ENCODE measurements at regions of chr9 and their contacts with region 1.

Region 1: DNA sequence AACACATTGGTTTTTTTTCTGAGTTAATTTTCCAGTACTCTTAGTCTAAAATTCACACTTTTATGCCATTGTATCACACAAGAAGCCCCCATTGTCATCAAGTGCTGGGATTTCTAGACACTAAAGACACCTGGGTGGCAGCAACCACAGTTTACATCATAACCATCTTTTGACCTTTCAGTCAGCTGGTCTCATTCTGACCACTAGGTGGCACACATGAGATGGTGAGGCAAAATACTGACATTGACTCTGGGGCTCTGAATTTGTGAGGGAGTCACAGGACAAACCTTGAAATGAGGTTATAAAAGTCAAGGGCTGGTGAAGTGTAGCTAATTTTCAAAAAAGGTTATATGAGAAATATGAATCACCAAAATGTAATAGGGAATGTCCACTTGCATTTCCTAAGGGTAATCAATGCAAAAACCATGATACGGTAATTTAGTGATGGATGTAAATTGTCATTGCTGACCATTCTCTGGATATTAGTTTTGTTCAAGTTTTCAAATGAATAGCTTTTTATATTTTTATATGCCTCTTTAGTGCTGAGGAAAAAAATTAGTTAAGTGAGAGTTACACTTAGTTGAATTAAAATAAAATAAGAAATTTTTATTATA is 229.4 kb downstream of the DMAC1 start:
- DNase-seq: peak; percentile 18 to 76 (median 63)
- ATAC-seq: peak; percentile 84
- H3K4me3 ChIP-seq: no peak overlapping the region
- H3K4me3 Mint-ChIP-seq: no peak overlapping the region
- H3K27ac ChIP-seq: no peak overlapping the region
- H3K27ac Mint-ChIP-seq: peak overlapping the region in 1 of 9 donors; percentile 26
- H3K4me1 ChIP-seq: no peaks in the 10 kb centered on the region
- H3K4me1 Mint-ChIP-seq: peaks cover 0 to 5% (median 0%) of the 10 kb centered on the region in 7 donors
- H3K27me3 ChIP-seq: no peaks in the 10 kb centered on the region
- H3K27me3 Mint-ChIP-seq: peaks cover 0 to 28% (median 3%) of the 10 kb centered on the region in 5 donors

Region 2: GRCh38 chr9:6703898-6704639 is 866.1 kb before region 1 on chr9:
- CTCF ChIA-PET with region 1: no interaction called
- POLR2A ChIA-PET with region 1: no interaction called
- intact Hi-C with region 1: no loop called
- DNase-seq: peak; percentile 70 to 86 (median 77)
- ATAC-seq: peak; percentile 90
- H3K4me3 ChIP-seq: peak overlapping the region; percentile 98
- H3K4me3 Mint-ChIP-seq: peak overlapping the region; percentile 82 to 98 (median 95)
- H3K27ac ChIP-seq: peak overlapping the region; percentile 97
- H3K27ac Mint-ChIP-seq: peak overlapping the region; percentile 91 to 98 (median 93)
- H3K4me1 ChIP-seq: no peaks in the 10 kb centered on the region
- H3K4me1 Mint-ChIP-seq: peaks cover 3 to 15% (median 6%) of the 10 kb centered on the region in 7 donors
- H3K27me3 ChIP-seq: no peaks in the 10 kb centered on the region
- H3K27me3 Mint-ChIP-seq: peaks cover 0 to 3% (median 0%) of the 10 kb centered on the region in 5 donors

Region 3: GRCh38 chr9:7613931-7614330 is 43.7 kb after region 1 on chr9:
- CTCF ChIA-PET with region 1: interaction called, 15 read pairs
- POLR2A ChIA-PET with region 1: no interaction called
- intact Hi-C with region 1: loop called (anchors 1 kb)
- DNase-seq: peak in 6 of 9 donors; percentile 15 to 59 (median 46)
- ATAC-seq: peak; percentile 70
- H3K4me3 ChIP-seq: peak overlapping the region; percentile 0
- H3K4me3 Mint-ChIP-seq: peak overlapping the region; percentile 68 to 90 (median 82)
- H3K27ac ChIP-seq: peak overlapping the region; percentile 31
- H3K27ac Mint-ChIP-seq: peak overlapping the region; percentile 71 to 87 (median 85)
- H3K4me1 ChIP-seq: peaks cover 9 to 29% of the 10 kb centered on the region in 2 donors
- H3K4me1 Mint-ChIP-seq: peaks cover 18 to 50% (median 38%) of the 10 kb centered on the region in 7 donors
- H3K27me3 ChIP-seq: no peaks in the 10 kb centered on the region
- H3K27me3 Mint-ChIP-seq: peaks cover 0 to 17% (median 0%) of the 10 kb centered on the region in 5 donors

Region 4: DNA sequence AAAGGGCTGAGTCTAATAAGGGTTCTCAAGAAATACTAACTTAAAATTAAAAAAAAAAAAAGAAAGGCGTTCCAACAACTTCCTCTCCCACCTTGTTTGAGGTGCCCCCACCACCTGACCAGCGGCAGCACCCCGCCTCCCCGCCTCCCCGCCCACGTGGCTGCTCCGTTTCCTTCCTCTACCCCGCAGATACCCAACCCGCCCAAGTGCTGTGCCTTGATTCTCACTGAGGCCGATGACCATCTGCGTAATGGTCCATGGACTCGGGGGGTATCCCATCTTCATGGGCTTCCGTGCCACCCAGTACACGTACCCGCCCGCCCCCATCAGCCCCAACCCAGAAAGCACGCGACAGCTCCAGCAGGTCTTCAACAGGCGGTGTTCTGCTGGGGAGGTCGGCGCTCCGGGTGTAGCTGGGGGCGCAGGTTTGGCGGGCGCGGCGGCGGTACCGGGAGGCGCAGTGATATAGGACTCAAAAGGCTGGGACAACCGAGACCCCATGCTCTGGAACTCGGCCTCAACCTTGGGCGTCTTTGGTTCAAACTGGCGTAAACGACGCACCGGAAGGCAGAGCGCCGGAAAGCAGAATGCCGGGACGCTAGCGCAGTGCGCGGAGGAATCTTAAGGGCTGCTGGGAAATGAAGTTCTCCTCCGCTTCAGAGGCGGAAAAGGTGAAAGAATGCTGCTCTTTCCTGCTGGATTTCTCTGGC is 229.2 kb after region 1 on chr9 and contains the start of gene DMAC1:
- CTCF ChIA-PET with region 1: no interaction called
- POLR2A ChIA-PET with region 1: interaction called, 3 read pairs
- intact Hi-C with region 1: loop called (anchors 1 to 5 kb)
- DNase-seq: peak; percentile 50 to 79 (median 72)
- ATAC-seq: peak; percentile 96
- H3K4me3 ChIP-seq: peak within 1 kb of the TSS; percentile 96
- H3K4me3 Mint-ChIP-seq: peak within 1 kb of the TSS; percentile 91 to 98 (median 95)
- H3K27ac ChIP-seq: peak within 1 kb of the TSS; percentile 88
- H3K27ac Mint-ChIP-seq: peak within 1 kb of the TSS; percentile 90 to 98 (median 93)
- H3K4me1 ChIP-seq: peaks cover 0 to 8% of the 10 kb centered on the region in 2 donors
- H3K4me1 Mint-ChIP-seq: peaks cover 12 to 62% (median 40%) of the 10 kb centered on the region in 7 donors
- H3K27me3 ChIP-seq: no peaks in the 10 kb centered on the region
- H3K27me3 Mint-ChIP-seq: peaks cover 0 to under 1% (median 0%) of the 10 kb centered on the region in 5 donors
- total RNA-seq, gene DMAC1: 17.5 to 54.1 (median 44.3) TPM

Region 5: DNA sequence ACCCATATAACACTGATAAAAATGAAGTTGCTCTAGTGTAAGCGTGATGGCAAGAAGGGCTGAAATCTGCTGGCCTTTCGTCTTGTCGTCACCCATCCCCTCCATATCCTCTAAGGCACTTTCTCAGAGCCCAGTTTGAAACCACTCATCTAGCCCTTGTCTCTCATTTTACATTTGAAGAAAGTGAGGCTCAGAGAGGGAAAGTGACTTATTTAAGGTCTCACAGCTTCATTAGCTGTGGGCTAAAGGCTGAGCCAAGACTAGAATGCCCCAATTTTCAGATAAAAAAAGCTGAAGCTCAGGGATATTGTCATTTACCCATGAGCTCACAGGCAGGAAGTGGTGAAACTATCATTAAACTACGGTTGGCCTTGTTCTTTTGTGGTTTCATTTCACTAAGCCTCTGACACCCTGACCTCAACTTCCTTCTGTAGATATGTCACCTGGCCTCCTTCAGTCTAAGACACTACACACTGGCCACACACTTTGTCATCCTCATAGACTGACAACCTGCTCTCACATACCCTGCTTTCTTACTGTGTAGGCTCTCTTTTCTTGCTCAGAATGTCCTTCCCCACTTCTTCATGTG is 406.0 kb after region 1 on chr9:
- CTCF ChIA-PET with region 1: no interaction called
- POLR2A ChIA-PET with region 1: no interaction called
- intact Hi-C with region 1: loop called in 1 of 2 experiments (anchors 5 kb)
- DNase-seq: peak in 8 of 9 donors; percentile 46 to 89 (median 82)
- ATAC-seq: peak; percentile 97
- H3K4me3 ChIP-seq: no peak overlapping the region
- H3K4me3 Mint-ChIP-seq: peak overlapping the region; percentile 16 to 80 (median 71)
- H3K27ac ChIP-seq: peak overlapping the region; percentile 14
- H3K27ac Mint-ChIP-seq: peak overlapping the region; percentile 76 to 97 (median 87)
- H3K4me1 ChIP-seq: peaks cover 41 to 60% of the 10 kb centered on the region in 2 donors
- H3K4me1 Mint-ChIP-seq: peaks cover 44 to 82% (median 72%) of the 10 kb centered on the region in 7 donors
- H3K27me3 ChIP-seq: no peaks in the 10 kb centered on the region
- H3K27me3 Mint-ChIP-seq: no peaks in the 10 kb centered on the region

Region 6: DNA sequence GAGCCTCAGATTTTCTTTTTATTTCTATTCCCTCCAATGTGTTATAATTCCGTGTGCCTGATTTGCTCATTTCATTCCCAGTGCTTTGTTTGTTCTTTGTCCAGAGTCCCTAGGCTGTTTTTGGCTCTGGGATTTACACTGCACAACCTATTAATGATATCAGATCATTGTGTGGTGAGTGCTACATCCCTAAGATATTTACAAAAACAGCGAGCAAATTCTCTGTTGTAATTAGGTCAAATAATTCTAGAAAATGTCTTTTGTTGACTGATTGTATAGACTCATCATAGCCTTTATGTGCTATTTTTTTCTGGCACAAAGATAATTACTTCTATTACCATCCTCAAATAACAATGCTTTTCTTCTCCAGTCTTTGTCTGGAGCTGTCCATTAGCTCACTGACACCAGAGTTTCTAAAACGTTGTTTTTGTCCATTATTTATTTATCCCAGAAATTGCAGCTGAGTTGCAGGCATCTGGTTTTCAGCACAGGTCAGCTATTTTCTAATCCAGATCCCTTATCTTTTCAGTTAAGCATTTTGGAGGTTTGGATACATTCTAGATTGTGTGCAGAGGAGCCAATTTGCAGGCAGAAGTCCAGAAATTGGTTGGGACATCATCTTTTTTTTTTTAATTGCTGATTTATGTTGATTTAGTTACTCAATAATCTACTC is 609.3 kb after region 1 on chr9:
- CTCF ChIA-PET with region 1: no interaction called
- POLR2A ChIA-PET with region 1: no interaction called
- intact Hi-C with region 1: loop called (anchors 2 to 10 kb)
- DNase-seq: no peak
- ATAC-seq: no peak
- H3K4me3 ChIP-seq: no peak overlapping the region
- H3K4me3 Mint-ChIP-seq: no peak overlapping the region
- H3K27ac ChIP-seq: no peak overlapping the region
- H3K27ac Mint-ChIP-seq: no peak overlapping the region
- H3K4me1 ChIP-seq: no peaks in the 10 kb centered on the region
- H3K4me1 Mint-ChIP-seq: peaks cover 0 to 5% (median 0%) of the 10 kb centered on the region in 7 donors
- H3K27me3 ChIP-seq: no peaks in the 10 kb centered on the region
- H3K27me3 Mint-ChIP-seq: peaks cover 0 to 4% (median 0%) of the 10 kb centered on the region in 5 donors